HCT116 (cell line): ENCODE measurements at regions of chr2 and their contacts with region 1.

Region 1: GRCh38 chr2:207625018-207625907 is at the start of gene METTL21A:
- DNase-seq: peak; percentile 77
- ATAC-seq: peak; percentile 72
- H3K4me3 ChIP-seq: peak within 1 kb of the TSS; percentile 79 to 94
- H3K27ac ChIP-seq: peak within 1 kb of the TSS; percentile 88
- H3K4me1 ChIP-seq: peaks cover 8 to 30% of the 10 kb centered on the region in 2 experiments; a peak in 3 of 4 replicates
- H3K27me3 ChIP-seq: no peaks in the 10 kb centered on the region
- CTCF ChIP-seq: peak in 2 of 3 experiments; percentile 14 to 32; a peak in 2 of 6 replicates
- POLR2A ChIP-seq: peak; percentile 45
- RAD21 ChIP-seq: peak; percentile 7; the same call in 1 of the 2 replicates
- total RNA-seq, gene METTL21A: 25.7 TPM

Region 2: DNA sequence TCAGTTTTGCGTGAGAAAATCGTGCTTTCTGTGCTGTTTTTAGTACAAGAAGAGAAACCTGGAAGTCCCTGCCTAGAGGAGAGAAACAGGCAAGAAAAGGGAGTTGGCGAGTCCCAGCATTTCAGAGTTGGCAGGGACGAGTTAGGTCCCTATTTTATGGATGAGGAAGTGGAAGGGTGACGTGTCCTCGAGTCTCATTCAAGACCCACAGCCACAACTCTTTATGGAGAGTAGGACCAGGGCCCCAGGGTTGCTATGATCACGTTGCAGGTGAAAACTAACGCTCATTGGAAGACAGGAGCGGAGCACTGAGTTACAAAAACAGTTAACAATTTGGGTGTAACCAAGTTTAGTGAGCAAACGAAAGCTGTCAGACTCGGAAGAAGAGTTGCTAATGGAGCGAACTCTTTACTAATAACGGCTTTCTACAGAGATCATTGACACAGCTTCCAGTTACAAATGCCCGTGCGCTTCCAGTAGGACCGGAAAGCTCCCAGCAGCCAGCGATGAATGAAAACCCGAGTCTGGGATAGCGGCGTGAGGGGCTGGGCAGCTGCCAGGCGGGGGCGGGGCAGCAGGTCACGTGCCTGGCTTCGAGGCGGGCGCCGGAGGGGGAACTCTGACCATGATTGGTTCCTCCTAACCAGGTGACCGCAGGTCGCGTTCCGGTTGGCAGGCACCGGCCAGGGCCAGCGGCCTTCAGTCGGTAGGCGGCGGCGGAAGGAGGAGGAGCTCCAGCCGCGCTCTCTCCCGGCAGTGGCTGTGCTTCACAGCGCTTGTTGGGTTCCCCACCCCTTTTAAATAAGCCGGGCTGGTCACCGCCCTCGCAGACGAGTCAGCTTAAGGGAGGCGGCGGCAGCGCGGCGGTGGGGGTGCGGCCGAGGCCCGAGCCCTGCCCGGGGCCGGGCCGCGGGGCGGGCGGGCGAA is 85.8 kb after region 1 on chr2 and contains the start of gene CCNYL1:
- CTCF ChIA-PET with region 1: interaction called, 4 read pairs
- POLR2A ChIA-PET with region 1: interaction called, 10 read pairs
- RAD21 ChIA-PET with region 1: interaction called in 1 of 2 experiments, 6 read pairs
- intact Hi-C with region 1: no loop called
- DNase-seq: peak; percentile 97
- ATAC-seq: peak; percentile 98
- H3K4me3 ChIP-seq: peak within 1 kb of the TSS; percentile 82 to 90
- H3K27ac ChIP-seq: peak within 1 kb of the TSS; percentile 68
- H3K4me1 ChIP-seq: peaks cover 4 to 19% of the 10 kb centered on the region in 2 experiments; a peak in 3 of 4 replicates
- H3K27me3 ChIP-seq: no peaks in the 10 kb centered on the region
- CTCF ChIP-seq: no peak
- POLR2A ChIP-seq: peak; percentile 58
- RAD21 ChIP-seq: no peak
- total RNA-seq, gene CCNYL1: 14.9 TPM

Region 3: GRCh38 chr2:207734264-207734635 is 109.0 kb after region 1 on chr2:
- CTCF ChIA-PET with region 1: no interaction called
- POLR2A ChIA-PET with region 1: no interaction called
- RAD21 ChIA-PET with region 1: no interaction called
- intact Hi-C with region 1: loop called (anchors 1 kb)
- DNase-seq: peak; percentile 21
- ATAC-seq: peak; percentile 85
- H3K4me3 ChIP-seq: no peak overlapping the region
- H3K27ac ChIP-seq: no peak overlapping the region
- H3K4me1 ChIP-seq: peaks cover 0 to 6% of the 10 kb centered on the region in 2 experiments; a peak in 1 of 4 replicates
- H3K27me3 ChIP-seq: no peaks in the 10 kb centered on the region
- CTCF ChIP-seq: peak; percentile 42 to 58 (median 53); a peak in 5 of 6 replicates
- POLR2A ChIP-seq: no peak
- RAD21 ChIP-seq: peak; percentile 76

Region 4: DNA sequence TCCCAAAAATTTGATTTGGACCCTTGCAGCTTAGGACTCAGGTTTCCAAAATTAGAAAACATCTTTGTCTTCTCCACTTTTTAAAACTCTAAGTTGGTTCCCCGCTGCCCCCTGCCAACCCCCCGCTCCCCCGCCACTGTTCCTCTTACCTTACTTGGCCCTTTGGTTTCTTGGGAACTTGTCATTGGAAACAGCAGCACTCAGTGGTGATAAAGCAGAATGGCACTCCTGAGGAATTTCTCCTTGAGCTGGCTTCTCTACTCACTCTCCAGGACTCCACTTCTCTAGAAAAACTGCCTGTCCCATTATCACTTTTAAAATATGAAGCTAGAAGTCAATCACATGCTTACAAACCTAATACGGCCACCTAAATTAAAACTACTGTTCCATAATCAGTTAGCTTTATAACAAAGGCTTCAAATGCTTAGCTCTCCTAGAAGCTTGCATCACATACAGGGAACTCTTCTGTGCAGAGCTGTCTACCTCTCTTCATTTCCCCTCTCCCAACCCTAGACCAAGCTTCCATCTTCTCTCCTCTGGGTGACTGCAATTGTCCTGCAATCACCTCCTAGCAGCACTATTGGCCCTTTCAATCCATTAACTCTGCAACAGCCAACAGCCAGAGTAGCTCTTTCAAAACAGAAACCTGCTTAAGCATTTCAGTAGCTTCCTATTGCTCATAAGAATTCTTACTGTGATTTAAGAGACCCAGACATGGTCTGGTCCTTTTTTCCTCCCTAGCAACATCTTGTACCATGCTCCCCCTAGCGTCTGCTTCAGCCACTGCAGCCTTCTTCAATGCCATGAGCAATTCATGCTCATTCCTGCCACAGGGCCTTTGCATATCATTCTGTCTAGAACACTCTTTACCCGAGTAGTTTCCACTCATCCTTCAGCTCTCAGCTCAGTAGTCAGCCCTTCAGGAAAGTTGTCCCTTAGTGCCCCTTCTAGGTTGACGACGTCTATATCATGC is 415.2 kb after region 1 on chr2:
- CTCF ChIA-PET with region 1: interaction called, 20 read pairs
- POLR2A ChIA-PET with region 1: no interaction called
- RAD21 ChIA-PET with region 1: interaction called in 1 of 2 experiments, 4 read pairs
- intact Hi-C with region 1: loop called (anchors 1 kb)
- DNase-seq: peak; percentile 70
- ATAC-seq: peak; percentile 92
- H3K4me3 ChIP-seq: no peak overlapping the region
- H3K27ac ChIP-seq: no peak overlapping the region
- H3K4me1 ChIP-seq: peaks cover 0 to 4% of the 10 kb centered on the region in 2 experiments; a peak in 1 of 4 replicates
- H3K27me3 ChIP-seq: no peaks in the 10 kb centered on the region
- CTCF ChIP-seq: peak; percentile 72 to 91 (median 84)
- POLR2A ChIP-seq: no peak
- RAD21 ChIP-seq: peak; percentile 74

Region 5: DNA sequence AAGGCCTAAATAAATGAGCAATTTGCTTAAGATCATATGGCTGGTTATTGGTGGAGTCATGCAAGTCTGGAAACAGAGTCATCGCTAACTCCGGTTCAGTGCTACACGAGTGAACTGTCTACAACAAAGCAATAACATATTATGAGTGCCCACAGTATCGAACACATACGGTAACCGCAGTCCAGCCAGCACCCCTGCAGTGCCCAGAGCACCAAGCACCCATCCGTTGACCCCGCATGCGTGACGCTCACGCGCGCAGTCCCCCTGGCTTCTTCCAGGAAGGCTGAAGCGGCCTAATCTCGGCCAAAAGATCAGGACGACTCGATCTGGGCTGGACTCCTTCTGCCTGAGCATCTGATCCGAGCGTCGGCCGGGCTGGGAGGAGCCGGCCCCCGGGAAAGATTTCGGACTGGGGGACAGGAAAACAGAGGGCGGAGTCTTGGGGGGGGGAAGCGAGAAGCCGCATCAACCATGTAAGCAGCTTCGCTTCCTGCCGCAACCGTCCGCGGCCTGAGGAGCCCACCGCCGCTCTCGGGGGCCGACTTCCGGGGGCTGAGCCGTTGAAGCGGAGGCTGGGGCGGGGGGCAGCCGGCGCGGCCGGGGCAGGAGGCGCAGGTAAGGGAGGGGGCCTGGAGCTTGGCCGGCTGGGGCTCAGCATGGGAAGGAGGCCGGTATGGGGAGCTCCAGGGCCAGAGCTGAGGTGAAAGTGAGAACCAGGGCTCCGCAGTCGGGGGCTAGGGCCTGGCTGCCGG is 640.7 kb after region 1 on chr2 and contains the start of gene PIKFYVE:
- CTCF ChIA-PET with region 1: no interaction called
- POLR2A ChIA-PET with region 1: no interaction called
- RAD21 ChIA-PET with region 1: no interaction called
- intact Hi-C with region 1: loop called (anchors 2 kb)
- DNase-seq: peak; percentile 96
- ATAC-seq: peak; percentile 91
- H3K4me3 ChIP-seq: peak within 1 kb of the TSS; percentile 90 to 91
- H3K27ac ChIP-seq: peak within 1 kb of the TSS; percentile 62
- H3K4me1 ChIP-seq: peaks cover 10 to 29% of the 10 kb centered on the region in 2 experiments
- H3K27me3 ChIP-seq: no peaks in the 10 kb centered on the region
- CTCF ChIP-seq: no peak
- POLR2A ChIP-seq: no peak
- RAD21 ChIP-seq: no peak
- total RNA-seq, gene PIKFYVE: 21.8 TPM